CD4-positive, alpha-beta T cell (primary cell): ENCODE measurements at regions of chr19 and their contacts with region 1.

Region 1: DNA sequence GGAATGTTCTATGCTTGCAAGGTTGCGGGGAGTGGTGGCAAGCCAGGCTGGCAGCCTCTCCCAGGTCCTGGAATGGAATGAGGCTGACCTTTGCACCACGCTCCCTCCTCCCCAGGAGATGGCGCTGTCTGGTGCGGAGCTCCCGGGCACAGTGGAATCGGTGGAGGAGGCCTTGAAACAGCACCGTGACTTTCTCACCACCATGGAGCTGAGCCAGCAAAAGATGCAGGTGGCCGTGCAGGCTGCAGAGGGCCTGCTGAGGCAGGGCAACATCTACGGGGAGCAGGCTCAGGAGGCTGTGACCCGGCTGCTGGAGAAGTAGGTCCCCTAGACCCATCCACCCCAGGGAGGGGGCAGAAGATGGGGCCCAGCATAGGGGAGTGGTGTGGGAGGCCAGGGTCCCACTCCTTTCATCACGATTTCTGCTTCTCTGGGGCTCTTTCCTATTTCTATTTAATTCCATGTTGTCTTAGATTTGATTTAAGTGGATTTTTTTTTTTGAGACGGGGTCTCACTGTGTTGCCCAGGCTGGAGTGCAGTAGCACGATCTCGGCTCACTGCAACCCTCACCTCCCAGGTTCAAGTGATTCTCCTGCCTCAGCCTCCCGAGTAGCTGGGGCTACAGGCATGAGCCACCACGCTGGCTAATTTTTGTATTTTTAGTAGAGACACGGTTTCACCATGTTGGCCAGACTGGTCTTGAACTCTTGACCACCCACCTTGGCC is 53.2 kb upstream of the SHKBP1 start:
- DNase-seq: peak in 9 of 14 experiments; percentile 9 to 70 (median 31)
- ATAC-seq: peak; percentile 65
- H3K4me3 ChIP-seq: no peak overlapping the region
- H3K4me3 Mint-ChIP-seq: no peak overlapping the region
- H3K27ac ChIP-seq: no peak overlapping the region
- H3K27ac Mint-ChIP-seq: no peak overlapping the region
- H3K4me1 ChIP-seq: peaks cover 3% of the 10 kb centered on the region
- H3K4me1 Mint-ChIP-seq: no peaks in the 10 kb centered on the region
- H3K27me3 ChIP-seq: peaks cover 4 to 13% of the 10 kb centered on the region in 2 experiments
- H3K27me3 Mint-ChIP-seq: peaks cover 24% of the 10 kb centered on the region
- CTCF ChIP-seq: no peak

Region 2: DNA sequence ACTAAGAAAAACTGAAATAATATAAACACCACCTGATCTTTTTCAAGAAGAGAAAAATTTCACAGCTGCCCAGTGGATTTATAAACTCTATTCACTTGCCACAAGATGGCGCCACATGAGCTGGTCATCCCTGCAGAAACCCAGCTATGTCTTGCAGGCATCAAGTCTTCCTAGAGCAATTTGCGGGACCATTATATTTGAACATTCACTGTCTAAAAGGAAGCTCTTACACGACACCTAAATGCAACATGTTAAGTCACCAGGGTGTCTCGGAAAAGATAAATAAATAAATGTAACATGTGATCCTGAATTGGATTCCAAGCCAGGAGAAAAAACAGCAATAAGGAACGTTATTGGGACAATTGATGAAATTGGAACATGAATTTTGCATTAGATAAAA is 218.1 kb before region 1 on chr19:
- CTCF ChIA-PET with region 1: no interaction called
- POLR2A ChIA-PET with region 1: no interaction called
- intact Hi-C with region 1: loop called (anchors 1 to 5 kb)
- DNase-seq: peak; percentile 49 to 86 (median 69)
- ATAC-seq: no peak
- H3K4me3 ChIP-seq: no peak overlapping the region
- H3K4me3 Mint-ChIP-seq: no peak overlapping the region
- H3K27ac ChIP-seq: no peak overlapping the region
- H3K27ac Mint-ChIP-seq: no peak overlapping the region
- H3K4me1 ChIP-seq: no peaks in the 10 kb centered on the region
- H3K4me1 Mint-ChIP-seq: no peaks in the 10 kb centered on the region
- H3K27me3 ChIP-seq: no peaks in the 10 kb centered on the region
- H3K27me3 Mint-ChIP-seq: no peaks in the 10 kb centered on the region
- CTCF ChIP-seq: peak; percentile 78

Region 3: DNA sequence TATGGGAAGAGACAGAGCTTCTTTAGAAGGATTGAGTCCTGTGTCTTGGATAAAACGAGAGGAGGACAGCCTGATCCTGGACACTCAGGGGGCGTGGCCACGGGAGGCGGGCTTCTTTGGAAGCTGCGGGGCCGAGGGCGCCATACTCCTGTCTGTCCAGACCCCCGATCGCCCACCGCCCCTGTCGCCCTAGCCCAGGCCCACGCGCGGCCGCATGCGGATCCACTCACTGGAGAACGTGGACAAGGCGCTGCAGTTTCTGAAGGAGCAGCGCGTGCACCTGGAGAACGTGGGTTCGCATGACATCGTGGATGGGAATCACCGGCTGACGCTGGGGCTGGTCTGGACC is 33.6 kb before region 1 on chr19:
- CTCF ChIA-PET with region 1: no interaction called
- POLR2A ChIA-PET with region 1: no interaction called
- intact Hi-C with region 1: no loop called
- DNase-seq: no peak
- ATAC-seq: no peak
- H3K4me3 ChIP-seq: no peak overlapping the region
- H3K4me3 Mint-ChIP-seq: no peak overlapping the region
- H3K27ac ChIP-seq: no peak overlapping the region
- H3K27ac Mint-ChIP-seq: no peak overlapping the region
- H3K4me1 ChIP-seq: peaks cover 8% of the 10 kb centered on the region
- H3K4me1 Mint-ChIP-seq: peaks cover 5% of the 10 kb centered on the region
- H3K27me3 ChIP-seq: peaks cover 14 to 19% of the 10 kb centered on the region in 2 experiments
- H3K27me3 Mint-ChIP-seq: peaks cover 30% of the 10 kb centered on the region
- CTCF ChIP-seq: no peak

Region 4: DNA sequence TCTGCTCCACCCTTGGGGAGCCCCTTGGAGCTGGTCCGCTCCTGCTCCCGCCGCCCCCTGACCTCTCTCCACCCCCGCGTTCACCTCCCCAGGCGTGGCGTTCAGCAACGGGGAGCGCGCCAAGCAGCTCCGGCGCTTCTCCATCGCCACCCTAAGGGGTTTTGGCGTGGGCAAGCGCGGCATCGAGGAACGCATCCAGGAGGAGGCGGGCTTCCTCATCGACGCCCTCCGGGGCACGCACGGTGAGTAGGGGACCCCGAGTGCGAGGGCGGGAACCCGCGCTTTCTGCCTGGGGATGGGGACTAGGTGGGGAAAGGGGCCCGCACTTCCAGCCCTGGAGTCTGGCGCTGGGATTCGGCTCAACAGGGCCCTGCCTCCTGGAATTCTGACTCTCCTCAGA is 566.5 kb after region 1 on chr19:
- CTCF ChIA-PET with region 1: no interaction called
- POLR2A ChIA-PET with region 1: no interaction called
- intact Hi-C with region 1: no loop called
- DNase-seq: peak in 1 of 14 experiments; percentile 13
- ATAC-seq: no peak
- H3K4me3 ChIP-seq: no peak overlapping the region
- H3K4me3 Mint-ChIP-seq: peak overlapping the region; percentile 49
- H3K27ac ChIP-seq: no peak overlapping the region
- H3K27ac Mint-ChIP-seq: no peak overlapping the region
- H3K4me1 ChIP-seq: peaks cover 3% of the 10 kb centered on the region
- H3K4me1 Mint-ChIP-seq: no peaks in the 10 kb centered on the region
- H3K27me3 ChIP-seq: peaks cover 24 to 28% of the 10 kb centered on the region in 2 experiments
- H3K27me3 Mint-ChIP-seq: peaks cover 94% of the 10 kb centered on the region
- CTCF ChIP-seq: no peak